HEK293 (cell line): ENCODE measurements at regions of chr18 and their contacts with region 1.

Region 1: GRCh38 chr18:61901323-61901986 is 8.6 kb upstream of the RNF152 start:
- H3K4me3 ChIP-seq: no peak overlapping the region
- H3K27ac ChIP-seq: no peak overlapping the region
- H3K4me1 ChIP-seq: no peaks in the 10 kb centered on the region
- CTCF ChIP-seq: peak; percentile 83

Region 2: GRCh38 chr18:60950634-60951033 is 950.8 kb before region 1 on chr18:
- CTCF ChIA-PET with region 1: no interaction called
- POLR2A ChIA-PET with region 1: no interaction called
- H3K4me3 ChIP-seq: no peak overlapping the region
- H3K27ac ChIP-seq: no peak overlapping the region
- H3K4me1 ChIP-seq: peaks cover 4% of the 10 kb centered on the region; the same call in 1 of the 2 replicates
- CTCF ChIP-seq: no peak

Region 3: GRCh38 chr18:61635901-61636528 is 265.4 kb before region 1 on chr18:
- CTCF ChIA-PET with region 1: interaction called, 15 read pairs
- POLR2A ChIA-PET with region 1: no interaction called
- H3K4me3 ChIP-seq: no peak overlapping the region
- H3K27ac ChIP-seq: no peak overlapping the region
- H3K4me1 ChIP-seq: no peaks in the 10 kb centered on the region
- CTCF ChIP-seq: peak; percentile 42; the same call in 1 of the 2 replicates